ENCODE measurements at regions of chr11 and their contacts with region 1.

Region 1: DNA sequence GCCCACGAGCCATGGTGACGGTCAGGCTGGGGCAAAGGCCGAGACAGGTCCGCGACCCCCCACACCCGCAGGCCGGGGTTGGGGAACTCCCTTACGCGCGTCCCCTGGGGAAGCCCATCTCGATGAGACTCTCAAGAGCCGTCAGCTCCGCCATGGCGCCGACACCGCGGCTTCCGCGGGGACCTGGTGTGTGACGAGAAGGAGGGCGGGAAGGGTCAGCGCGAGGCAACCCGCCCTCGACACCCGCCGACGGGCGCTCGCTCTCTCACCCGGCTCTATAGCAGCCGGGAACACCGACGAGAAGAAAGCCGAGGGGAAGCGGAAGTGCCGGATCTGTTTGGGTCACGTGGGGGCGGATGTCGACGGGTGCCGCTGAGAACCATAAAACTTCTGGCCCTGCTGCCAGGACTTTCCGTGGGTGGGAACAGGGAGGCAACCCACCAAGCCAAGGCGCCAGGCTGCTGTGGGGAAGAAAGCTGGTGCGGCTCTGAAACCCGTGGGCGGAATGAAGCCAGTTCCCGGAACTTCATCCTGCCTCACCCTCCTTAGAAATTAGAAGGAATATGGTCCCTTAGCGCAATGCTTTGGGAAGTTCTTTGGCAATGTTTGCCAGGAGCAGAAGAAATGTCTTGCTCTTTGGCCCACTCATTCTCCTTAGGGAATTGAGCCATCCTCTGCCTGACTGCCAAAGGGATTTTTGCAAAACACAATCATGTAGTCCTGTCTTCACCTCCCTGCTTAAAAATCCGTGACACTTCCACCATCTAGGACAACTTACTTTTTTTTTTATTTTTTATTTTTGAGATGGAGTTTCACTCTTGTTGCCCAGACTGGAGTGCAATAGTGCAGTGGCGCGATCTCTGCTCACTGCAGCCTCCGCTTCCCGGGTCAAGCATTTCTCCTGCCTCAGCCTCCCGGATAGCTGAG is at the start of gene UBXN1:
- DNase-seq: peak; percentile 89
- H3K4me3 Mint-ChIP-seq: peak within 1 kb of the TSS; percentile 72
- H3K27ac Mint-ChIP-seq: peak within 1 kb of the TSS; percentile 94
- H3K4me1 Mint-ChIP-seq: peaks cover 22% of the 10 kb centered on the region
- H3K27me3 Mint-ChIP-seq: no peaks in the 10 kb centered on the region
- CTCF ChIP-seq: no peak
- total RNA-seq, gene UBXN1: 146 and 153 TPM in 2 replicates

Region 2: GRCh38 chr11:62577151-62577699 is 101.8 kb before region 1 on chr11:
- CTCF ChIA-PET with region 1: no interaction called
- POLR2A ChIA-PET with region 1: no interaction called
- intact Hi-C with region 1: no loop called
- DNase-seq: no peak
- H3K4me3 Mint-ChIP-seq: no peak overlapping the region
- H3K27ac Mint-ChIP-seq: no peak overlapping the region
- H3K4me1 Mint-ChIP-seq: peaks cover 15% of the 10 kb centered on the region
- H3K27me3 Mint-ChIP-seq: no peaks in the 10 kb centered on the region
- CTCF ChIP-seq: no peak

Region 3: DNA sequence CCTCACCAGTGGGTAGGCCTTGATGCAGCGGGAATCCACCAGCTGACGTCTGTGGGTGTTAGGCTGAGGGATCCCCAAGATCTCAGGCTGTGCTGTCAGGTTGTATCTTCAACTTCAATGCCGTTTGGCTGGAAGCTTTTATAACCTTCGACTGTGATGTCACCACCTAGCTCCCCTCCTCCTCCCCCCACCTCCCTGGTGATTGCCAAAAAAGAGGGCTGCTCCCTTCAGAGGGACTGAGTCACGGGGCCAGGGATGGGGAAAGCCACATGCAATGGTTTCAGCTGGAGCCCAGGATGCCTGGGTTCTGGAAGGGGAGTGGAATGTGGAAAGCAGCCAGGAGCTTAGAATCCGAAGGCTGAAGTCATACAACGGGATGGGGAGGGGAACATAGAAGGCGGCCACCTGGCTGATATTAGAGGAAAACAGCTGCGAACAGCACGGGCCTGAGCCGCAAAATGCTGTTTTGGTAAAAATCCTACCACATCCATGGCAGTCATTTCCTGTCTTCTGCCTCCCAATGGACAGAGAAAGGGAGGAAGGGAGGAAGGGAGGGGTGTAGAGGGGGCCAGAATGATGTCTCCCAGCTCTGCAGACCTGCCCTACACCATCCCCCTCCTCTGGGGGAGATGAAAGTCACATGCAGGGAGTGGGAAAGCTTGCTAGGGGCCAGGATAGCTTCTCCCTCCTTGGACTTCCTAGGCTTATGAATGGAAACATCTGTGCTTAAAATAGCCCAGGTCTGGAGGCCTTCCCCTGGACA is 10.6 kb after region 1 on chr11 and contains the start of gene LRRN4CL:
- CTCF ChIA-PET with region 1: interaction called, 72 read pairs
- POLR2A ChIA-PET with region 1: interaction called, 15 read pairs
- intact Hi-C with region 1: loop called (anchors 2 kb)
- DNase-seq: peak; percentile 83
- H3K4me3 Mint-ChIP-seq: no peak within 1 kb of the TSS
- H3K27ac Mint-ChIP-seq: peak within 1 kb of the TSS; percentile 86
- H3K4me1 Mint-ChIP-seq: peaks cover 19% of the 10 kb centered on the region
- H3K27me3 Mint-ChIP-seq: no peaks in the 10 kb centered on the region
- CTCF ChIP-seq: no peak
- total RNA-seq, gene LRRN4CL: 0.42 and 0.81 TPM in 2 replicates

Region 4: GRCh38 chr11:62694455-62695167 is 15.6 kb after region 1 on chr11:
- CTCF ChIA-PET with region 1: interaction called, 72 read pairs
- POLR2A ChIA-PET with region 1: interaction called, 15 read pairs
- intact Hi-C with region 1: loop called (anchors 2 kb)
- DNase-seq: peak; percentile 86
- H3K4me3 Mint-ChIP-seq: no peak overlapping the region
- H3K27ac Mint-ChIP-seq: no peak overlapping the region
- H3K4me1 Mint-ChIP-seq: peaks cover 6% of the 10 kb centered on the region
- H3K27me3 Mint-ChIP-seq: no peaks in the 10 kb centered on the region
- CTCF ChIP-seq: peak; percentile 80

Region 5: GRCh38 chr11:62705880-62706849 is 27.1 kb after region 1 on chr11:
- CTCF ChIA-PET with region 1: interaction called, 33 read pairs
- POLR2A ChIA-PET with region 1: interaction called, 16 read pairs
- intact Hi-C with region 1: no loop called
- DNase-seq: peak; percentile 91
- H3K4me3 Mint-ChIP-seq: peak overlapping the region; percentile 92
- H3K27ac Mint-ChIP-seq: peak overlapping the region; percentile 94
- H3K4me1 Mint-ChIP-seq: peaks cover 25% of the 10 kb centered on the region
- H3K27me3 Mint-ChIP-seq: no peaks in the 10 kb centered on the region
- CTCF ChIP-seq: no peak

Region 6: GRCh38 chr11:62753736-62754603 is 74.9 kb after region 1 on chr11 and contains the start of gene ZBTB3:
- CTCF ChIA-PET with region 1: interaction called, 10 read pairs
- POLR2A ChIA-PET with region 1: interaction called, 10 read pairs
- intact Hi-C with region 1: no loop called
- DNase-seq: peak; percentile 100
- H3K4me3 Mint-ChIP-seq: peak within 1 kb of the TSS; percentile 98
- H3K27ac Mint-ChIP-seq: peak within 1 kb of the TSS; percentile 96
- H3K4me1 Mint-ChIP-seq: peaks cover 3% of the 10 kb centered on the region
- H3K27me3 Mint-ChIP-seq: no peaks in the 10 kb centered on the region
- CTCF ChIP-seq: no peak
- total RNA-seq, gene ZBTB3: 7.1 and 11.6 TPM in 2 replicates